PC-9 (cell line): ENCODE measurements at regions of chr2 and their contacts with region 1.

Region 1: DNA sequence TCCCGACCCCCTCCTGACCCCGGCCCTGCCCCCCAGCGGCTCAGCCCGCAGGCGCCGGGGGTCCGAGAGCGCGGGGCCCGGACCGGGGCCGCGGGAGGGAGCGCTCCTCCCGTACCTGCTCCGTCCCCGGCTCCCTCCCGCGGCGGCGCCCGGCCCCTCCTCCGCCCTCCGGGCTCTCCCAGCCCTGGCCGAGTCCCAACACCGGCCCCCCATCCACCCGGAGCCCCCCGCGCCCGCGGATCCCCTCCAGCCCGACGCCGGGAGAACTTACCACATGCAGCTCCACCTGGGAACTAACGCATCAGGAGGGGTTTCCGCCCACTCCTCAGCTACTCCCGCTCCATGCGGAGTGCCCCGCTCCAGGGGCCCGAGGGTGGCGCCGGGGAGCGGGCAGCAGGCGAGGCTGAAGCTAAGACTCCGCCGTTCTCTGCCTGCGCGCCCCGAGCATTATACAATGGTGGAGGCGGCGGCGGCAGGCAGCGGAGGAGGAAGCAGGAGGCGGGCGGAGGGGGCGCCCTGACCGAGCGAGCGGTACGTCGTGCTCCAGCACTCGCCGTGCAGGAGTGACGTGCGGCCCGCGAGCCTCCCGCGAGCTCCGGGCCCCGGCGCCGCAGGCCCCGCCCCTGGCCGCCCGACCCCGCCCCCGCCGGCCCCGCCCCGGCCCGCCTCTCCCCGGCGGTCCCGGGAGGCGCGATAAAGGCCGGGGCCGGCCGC is at the start of gene SERTAD2:
- DNase-seq: peak; percentile 70 to 90
- H3K4me3 ChIP-seq: peak within 1 kb of the TSS; percentile 98
- H3K27ac ChIP-seq: peak within 1 kb of the TSS; percentile 87
- H3K4me1 ChIP-seq: peaks cover 56% of the 10 kb centered on the region
- H3K27me3 ChIP-seq: no peaks in the 10 kb centered on the region
- CTCF ChIP-seq: peak; percentile 41; the same call in 1 of the 2 replicates
- total RNA-seq, gene SERTAD2: 27.3 and 31.4 TPM in 2 replicates

Region 2: GRCh38 chr2:64523666-64524603 is 129.6 kb before region 1 on chr2 and contains the start of gene AFTPH:
- CTCF ChIA-PET with region 1: no interaction called
- POLR2A ChIA-PET with region 1: interaction called, 6 read pairs
- intact Hi-C with region 1: loop called (anchors 2 kb)
- DNase-seq: peak; percentile 98 to 99
- H3K4me3 ChIP-seq: peak within 1 kb of the TSS; percentile 67
- H3K27ac ChIP-seq: peak within 1 kb of the TSS; percentile 72
- H3K4me1 ChIP-seq: peaks cover 18% of the 10 kb centered on the region
- H3K27me3 ChIP-seq: no peaks in the 10 kb centered on the region
- CTCF ChIP-seq: no peak
- total RNA-seq, gene AFTPH: 34.4 and 40.5 TPM in 2 replicates

Region 3: DNA sequence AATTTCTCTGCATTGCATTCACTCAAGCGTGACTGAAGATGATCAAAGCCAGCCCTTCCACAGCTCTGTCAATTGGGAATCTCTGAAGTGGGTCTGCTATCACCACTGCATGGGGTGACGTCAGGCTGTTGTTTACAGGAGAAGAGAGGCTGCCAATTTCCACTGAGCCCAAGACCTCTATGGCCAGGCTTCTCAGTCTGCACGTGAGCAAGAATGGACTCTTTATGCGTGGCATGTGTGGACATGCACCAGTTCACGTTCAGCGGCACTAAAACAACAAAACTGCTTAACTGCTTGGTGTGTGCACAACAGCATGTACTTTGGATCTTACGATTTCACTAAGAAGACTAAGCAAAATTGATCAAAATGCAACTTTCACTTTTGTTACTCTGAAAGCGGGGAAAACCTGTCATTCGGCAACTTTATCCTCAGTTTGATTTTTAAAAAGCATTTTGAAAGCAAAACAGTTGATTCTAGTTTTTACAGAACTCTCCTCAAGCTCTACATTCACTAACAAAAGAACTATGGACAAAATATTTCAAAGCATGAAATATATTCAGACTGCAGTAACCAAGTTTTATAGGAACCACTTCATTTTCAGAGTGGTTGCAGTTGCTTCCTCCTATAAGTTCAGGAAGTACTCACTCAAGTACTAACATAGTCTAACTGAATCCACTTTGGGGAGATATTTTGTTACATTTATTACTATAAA is 77.2 kb after region 1 on chr2:
- CTCF ChIA-PET with region 1: no interaction called
- POLR2A ChIA-PET with region 1: interaction called, 12 read pairs
- intact Hi-C with region 1: no loop called
- DNase-seq: no peak
- H3K4me3 ChIP-seq: no peak overlapping the region
- H3K27ac ChIP-seq: no peak overlapping the region
- H3K4me1 ChIP-seq: 0 out of 2 replicates have a peak, but pooled peaks cover 4% of the 10 kb centered on the region
- H3K27me3 ChIP-seq: no peaks in the 10 kb centered on the region
- CTCF ChIP-seq: no peak

Region 4: DNA sequence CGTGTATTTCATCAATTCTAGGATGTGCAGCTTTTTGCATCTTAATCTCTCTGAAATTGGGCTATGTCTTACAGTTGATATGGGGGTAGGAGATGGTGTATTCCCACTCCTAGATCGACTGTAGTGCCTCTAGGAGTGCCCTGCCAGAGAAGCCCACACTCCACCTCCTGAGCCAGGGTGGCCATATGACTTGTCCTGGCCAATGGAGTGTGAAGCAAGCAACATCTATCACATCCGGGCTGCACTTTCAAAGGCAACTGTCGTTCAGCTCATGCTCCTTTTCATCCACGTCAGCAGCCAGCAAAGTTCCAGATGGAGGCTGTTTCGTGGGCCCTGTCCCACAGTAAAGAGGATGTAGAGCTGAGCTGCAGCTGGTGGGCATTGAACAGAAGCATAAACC is 186.3 kb after region 1 on chr2:
- CTCF ChIA-PET with region 1: interaction called, 13 read pairs
- POLR2A ChIA-PET with region 1: interaction called, 13 read pairs
- intact Hi-C with region 1: no loop called
- DNase-seq: no peak
- H3K4me3 ChIP-seq: no peak overlapping the region
- H3K27ac ChIP-seq: peak overlapping the region; percentile 87
- H3K4me1 ChIP-seq: peaks cover 59% of the 10 kb centered on the region
- H3K27me3 ChIP-seq: no peaks in the 10 kb centered on the region
- CTCF ChIP-seq: no peak

Region 5: GRCh38 chr2:65142515-65142914 is 489.0 kb after region 1 on chr2:
- CTCF ChIA-PET with region 1: no interaction called
- POLR2A ChIA-PET with region 1: interaction called, 21 read pairs
- intact Hi-C with region 1: no loop called
- DNase-seq: no peak
- H3K4me3 ChIP-seq: no peak overlapping the region
- H3K27ac ChIP-seq: no peak overlapping the region
- H3K4me1 ChIP-seq: no peaks in the 10 kb centered on the region
- H3K27me3 ChIP-seq: no peaks in the 10 kb centered on the region
- CTCF ChIP-seq: peak; percentile 45; the same call in 1 of the 2 replicates